ENCODE measurements at regions of chr7 and their contacts with region 1.

Region 1: GRCh38 chr7:101217388-101218235 is at the starts of genes PLOD3 and ZNHIT1:
- DNase-seq: peak; percentile 99
- H3K4me3 ChIP-seq: peak within 1 kb of the TSS; percentile 73 to 97 (median 89)
- H3K27ac ChIP-seq: peak within 1 kb of the TSS; percentile 90 to 94 (median 93)
- H3K4me1 ChIP-seq: peaks cover 0 to 49% (median 36%) of the 10 kb centered on the region in 4 donors
- H3K27me3 ChIP-seq: no peaks in the 10 kb centered on the region
- CTCF ChIP-seq: no peak
- EP300 ChIP-seq: no peak
- POLR2A ChIP-seq: peak in 1 of 2 donors; percentile 37
- total RNA-seq, gene PLOD3: 23.9 to 36.6 (median 26.4) TPM
- total RNA-seq, gene ZNHIT1: 64.8 to 97.4 (median 84.7) TPM

Region 2: DNA sequence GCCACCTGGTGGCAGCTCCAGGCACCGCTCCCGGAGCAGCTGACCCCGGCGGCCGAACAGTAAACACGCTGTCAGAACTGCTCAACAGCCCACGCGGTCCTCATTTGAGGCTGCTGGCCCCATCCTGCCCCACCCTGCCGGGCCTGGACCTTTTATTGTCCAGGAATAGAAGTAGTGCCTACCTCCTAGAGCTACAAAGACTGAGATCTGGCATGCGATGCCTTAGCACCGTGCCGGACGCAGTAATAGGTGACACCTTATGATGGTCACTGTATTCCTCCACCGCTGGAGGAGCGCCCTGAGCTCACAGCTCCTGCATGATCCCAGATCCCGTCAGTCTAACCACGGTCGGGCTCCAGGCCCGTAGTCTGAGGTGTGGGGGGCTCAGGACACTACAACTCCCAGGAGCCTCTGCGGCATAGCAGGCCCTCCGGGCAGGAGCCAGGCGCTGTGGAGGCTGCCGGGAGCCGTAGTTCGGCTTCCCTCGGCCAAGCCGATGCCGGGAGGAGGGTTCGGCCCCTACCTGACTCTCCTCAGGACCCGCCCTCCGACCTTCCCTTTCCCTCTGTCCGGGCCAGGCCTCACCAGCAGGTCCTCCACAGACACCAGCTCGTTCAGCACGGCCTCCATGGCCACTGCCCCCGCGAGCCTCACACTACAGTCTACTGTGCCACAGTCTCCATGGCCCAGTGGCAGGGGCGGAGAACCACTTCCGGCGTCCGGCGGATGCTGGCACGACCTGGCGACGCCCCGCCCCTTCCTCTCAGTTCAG is 26.9 kb after region 1 on chr7 and contains the start of gene FIS1:
- intact Hi-C with region 1: loop called (anchors 1 kb)
- DNase-seq: peak; percentile 97
- H3K4me3 ChIP-seq: peak within 1 kb of the TSS; percentile 60 to 91 (median 84)
- H3K27ac ChIP-seq: peak within 1 kb of the TSS; percentile 89 to 99 (median 96)
- H3K4me1 ChIP-seq: peaks cover 0 to 41% (median 26%) of the 10 kb centered on the region in 4 donors
- H3K27me3 ChIP-seq: no peaks in the 10 kb centered on the region
- CTCF ChIP-seq: peak; percentile 81 to 97 (median 92)
- EP300 ChIP-seq: no peak
- POLR2A ChIP-seq: peak; percentile 64 to 87
- total RNA-seq, gene FIS1: 237 to 443 (median 426) TPM

Region 3: GRCh38 chr7:101287032-101287431 is 69.4 kb after region 1 on chr7:
- intact Hi-C with region 1: loop called (anchors 10 kb)
- DNase-seq: no peak
- H3K4me3 ChIP-seq: no peak overlapping the region
- H3K27ac ChIP-seq: no peak overlapping the region
- H3K4me1 ChIP-seq: peaks cover 0 to 4% (median 4%) of the 10 kb centered on the region in 4 donors
- H3K27me3 ChIP-seq: peaks cover 3 to 22% (median 9%) of the 10 kb centered on the region in 3 donors
- CTCF ChIP-seq: no peak
- EP300 ChIP-seq: no peak
- POLR2A ChIP-seq: no peak

Region 4: DNA sequence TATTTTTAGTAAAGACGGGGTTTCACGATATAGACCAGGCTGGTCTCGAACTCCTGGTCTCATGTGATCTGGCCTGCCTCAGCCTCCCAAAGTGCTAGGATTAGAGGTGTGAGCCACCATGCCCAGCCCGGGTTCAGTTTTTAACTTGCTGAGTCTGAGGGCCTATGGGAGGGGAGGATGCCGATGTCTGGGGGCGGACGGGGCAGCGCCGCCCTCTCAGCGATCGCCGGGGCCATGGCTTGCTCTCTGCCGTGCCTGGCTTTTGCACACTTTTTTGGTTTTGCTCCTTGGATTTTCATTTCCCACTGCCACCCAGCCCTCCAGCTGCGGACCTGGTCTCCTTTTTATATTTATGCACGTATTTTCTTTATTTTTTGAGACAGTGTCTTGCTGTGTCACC is 129.9 kb after region 1 on chr7:
- intact Hi-C with region 1: no loop called
- DNase-seq: no peak
- H3K4me3 ChIP-seq: no peak overlapping the region
- H3K27ac ChIP-seq: no peak overlapping the region
- H3K4me1 ChIP-seq: no peaks in the 10 kb centered on the region
- H3K27me3 ChIP-seq: no peaks in the 10 kb centered on the region
- CTCF ChIP-seq: no peak
- EP300 ChIP-seq: no peak
- POLR2A ChIP-seq: no peak